Activated B cell treated with CpG ODN at 0.5 μM for 24 hours (primary cell): ENCODE measurements at regions of chr22 and their contacts with region 1.

Region 1: DNA sequence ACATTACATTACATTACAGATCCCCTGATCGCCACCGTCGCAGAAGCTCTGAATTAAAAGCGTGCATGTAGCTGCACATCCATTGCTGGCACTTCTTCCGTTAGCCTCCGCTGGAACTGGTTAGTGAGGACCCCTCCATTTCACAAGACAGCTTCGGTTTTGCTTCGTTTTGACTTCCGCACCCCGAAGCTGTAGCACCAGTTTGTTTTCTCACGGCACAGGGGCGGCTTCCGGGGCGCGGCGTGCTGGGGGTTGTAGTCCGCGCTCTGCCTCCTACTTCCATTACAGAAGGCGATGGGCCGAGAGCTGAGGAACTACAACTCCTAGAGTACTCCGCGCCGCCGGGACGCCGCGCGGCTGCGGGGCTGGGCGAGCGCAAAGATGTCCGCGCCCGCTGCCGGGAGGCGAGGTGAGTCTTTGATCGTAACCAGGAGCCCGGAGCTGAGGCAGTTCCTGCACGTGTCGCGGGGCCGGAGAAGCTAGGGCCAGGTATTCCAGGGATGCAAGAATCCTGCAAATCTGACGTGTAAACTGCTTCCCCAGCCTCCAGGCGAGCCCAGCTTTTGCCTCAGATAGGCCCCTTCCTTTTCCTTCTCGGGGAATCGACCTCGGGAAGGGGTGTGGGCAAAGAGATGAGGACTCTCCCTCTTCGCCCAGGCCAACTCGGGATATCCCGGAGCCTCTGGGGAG is at the start of gene PEX26:
- DNase-seq: peak; percentile 84
- ATAC-seq: peak; percentile 98
- H3K4me3 Mint-ChIP-seq: peak within 1 kb of the TSS; percentile 95
- H3K27ac Mint-ChIP-seq: peak within 1 kb of the TSS; percentile 97
- H3K4me1 Mint-ChIP-seq: peaks cover 50% of the 10 kb centered on the region
- H3K27me3 Mint-ChIP-seq: no peaks in the 10 kb centered on the region
- CTCF ChIP-seq: no peak
- total RNA-seq, gene PEX26: 31.5 and 35.2 TPM in 2 replicates

Region 2: GRCh38 chr22:17562906-17563870 is 514.6 kb before region 1 on chr22 and contains the start of gene SLC25A18:
- CTCF ChIA-PET with region 1: interaction called, 10 read pairs
- POLR2A ChIA-PET with region 1: no interaction called
- intact Hi-C with region 1: loop called (anchors 2 kb)
- DNase-seq: no peak
- ATAC-seq: no peak
- H3K4me3 Mint-ChIP-seq: no peak within 1 kb of the TSS
- H3K27ac Mint-ChIP-seq: no peak within 1 kb of the TSS
- H3K4me1 Mint-ChIP-seq: no peaks in the 10 kb centered on the region
- H3K27me3 Mint-ChIP-seq: peaks cover 5% of the 10 kb centered on the region
- CTCF ChIP-seq: no peak
- total RNA-seq, gene SLC25A18: 0.15 and 0.27 TPM in 2 replicates

Region 3: DNA sequence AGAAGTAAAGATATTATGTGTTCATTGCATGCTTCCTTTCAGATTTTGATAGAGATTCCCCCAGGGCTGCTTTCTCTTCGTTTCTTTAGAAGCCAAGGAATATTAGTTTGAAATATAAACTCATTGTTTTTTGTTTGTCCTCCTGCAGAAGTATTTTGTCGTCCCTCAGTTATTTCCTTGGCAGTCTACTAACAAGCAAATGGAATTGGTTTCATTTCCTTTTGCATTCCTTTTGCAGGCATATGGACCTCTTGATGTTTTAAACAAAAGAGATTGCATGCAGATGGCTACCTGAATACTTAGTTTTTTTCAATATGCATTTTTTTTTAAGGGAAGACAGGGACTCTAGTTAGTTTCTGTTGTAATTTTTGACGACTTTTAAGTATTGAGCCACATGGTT is 377.0 kb before region 1 on chr22:
- CTCF ChIA-PET with region 1: no interaction called
- POLR2A ChIA-PET with region 1: no interaction called
- intact Hi-C with region 1: no loop called
- DNase-seq: no peak
- ATAC-seq: no peak
- H3K4me3 Mint-ChIP-seq: no peak overlapping the region
- H3K27ac Mint-ChIP-seq: no peak overlapping the region
- H3K4me1 Mint-ChIP-seq: peaks cover 6% of the 10 kb centered on the region
- H3K27me3 Mint-ChIP-seq: no peaks in the 10 kb centered on the region
- CTCF ChIP-seq: no peak

Region 4: DNA sequence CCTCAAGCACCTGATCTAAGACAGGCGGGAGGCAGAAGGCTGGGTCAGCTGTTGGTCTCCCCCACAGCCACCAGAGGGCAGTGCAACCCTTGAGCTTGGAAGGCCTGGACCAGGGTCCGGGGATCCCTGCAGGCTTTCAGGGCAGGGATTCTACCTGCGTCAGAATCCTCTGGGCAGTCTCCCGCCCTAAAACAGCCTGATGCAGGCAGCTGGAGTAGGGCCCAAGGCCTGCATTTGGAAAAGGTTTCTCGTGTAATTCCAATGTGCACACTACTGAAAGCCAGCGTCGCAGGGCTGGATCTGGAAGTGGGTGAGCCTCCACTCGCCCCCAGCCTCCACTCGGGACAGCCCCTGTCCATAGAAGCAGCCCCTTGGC is 335.3 kb before region 1 on chr22:
- CTCF ChIA-PET with region 1: interaction called, 40 read pairs
- POLR2A ChIA-PET with region 1: interaction called, 3 read pairs
- intact Hi-C with region 1: loop called (anchors 1 kb)
- DNase-seq: peak; percentile 59
- ATAC-seq: peak; percentile 95
- H3K4me3 Mint-ChIP-seq: no peak overlapping the region
- H3K27ac Mint-ChIP-seq: no peak overlapping the region
- H3K4me1 Mint-ChIP-seq: peaks cover 9% of the 10 kb centered on the region
- H3K27me3 Mint-ChIP-seq: no peaks in the 10 kb centered on the region
- CTCF ChIP-seq: no peak

Region 5: GRCh38 chr22:17830043-17830961 is 247.5 kb before region 1 on chr22:
- CTCF ChIA-PET with region 1: interaction called, 159 read pairs
- POLR2A ChIA-PET with region 1: interaction called, 11 read pairs
- intact Hi-C with region 1: loop called (anchors 1 kb)
- DNase-seq: peak; percentile 75
- ATAC-seq: peak; percentile 98
- H3K4me3 Mint-ChIP-seq: no peak overlapping the region
- H3K27ac Mint-ChIP-seq: peak overlapping the region; percentile 27
- H3K4me1 Mint-ChIP-seq: peaks cover 7% of the 10 kb centered on the region
- H3K27me3 Mint-ChIP-seq: no peaks in the 10 kb centered on the region
- CTCF ChIP-seq: peak; percentile 97

Region 6: GRCh38 chr22:18001040-18001893 is 76.5 kb before region 1 on chr22:
- CTCF ChIA-PET with region 1: interaction called, 57 read pairs
- POLR2A ChIA-PET with region 1: interaction called, 66 read pairs
- intact Hi-C with region 1: loop called (anchors 1 kb)
- DNase-seq: peak; percentile 88
- ATAC-seq: peak; percentile 66
- H3K4me3 Mint-ChIP-seq: peak overlapping the region; percentile 92
- H3K27ac Mint-ChIP-seq: peak overlapping the region; percentile 99
- H3K4me1 Mint-ChIP-seq: peaks cover 85% of the 10 kb centered on the region
- H3K27me3 Mint-ChIP-seq: no peaks in the 10 kb centered on the region
- CTCF ChIP-seq: no peak

Region 7: GRCh38 chr22:18065256-18065655 is 12.5 kb before region 1 on chr22:
- CTCF ChIA-PET with region 1: interaction called, 21 read pairs
- POLR2A ChIA-PET with region 1: interaction called, 9 read pairs
- intact Hi-C with region 1: no loop called
- DNase-seq: no peak
- ATAC-seq: peak; percentile 30
- H3K4me3 Mint-ChIP-seq: peak overlapping the region; percentile 6
- H3K27ac Mint-ChIP-seq: no peak overlapping the region
- H3K4me1 Mint-ChIP-seq: peaks cover 64% of the 10 kb centered on the region
- H3K27me3 Mint-ChIP-seq: no peaks in the 10 kb centered on the region
- CTCF ChIP-seq: no peak